Adrenal gland (tissue), 19 donors: ENCODE measurements at regions of chr18 and their contacts with region 1.

Region 1: DNA sequence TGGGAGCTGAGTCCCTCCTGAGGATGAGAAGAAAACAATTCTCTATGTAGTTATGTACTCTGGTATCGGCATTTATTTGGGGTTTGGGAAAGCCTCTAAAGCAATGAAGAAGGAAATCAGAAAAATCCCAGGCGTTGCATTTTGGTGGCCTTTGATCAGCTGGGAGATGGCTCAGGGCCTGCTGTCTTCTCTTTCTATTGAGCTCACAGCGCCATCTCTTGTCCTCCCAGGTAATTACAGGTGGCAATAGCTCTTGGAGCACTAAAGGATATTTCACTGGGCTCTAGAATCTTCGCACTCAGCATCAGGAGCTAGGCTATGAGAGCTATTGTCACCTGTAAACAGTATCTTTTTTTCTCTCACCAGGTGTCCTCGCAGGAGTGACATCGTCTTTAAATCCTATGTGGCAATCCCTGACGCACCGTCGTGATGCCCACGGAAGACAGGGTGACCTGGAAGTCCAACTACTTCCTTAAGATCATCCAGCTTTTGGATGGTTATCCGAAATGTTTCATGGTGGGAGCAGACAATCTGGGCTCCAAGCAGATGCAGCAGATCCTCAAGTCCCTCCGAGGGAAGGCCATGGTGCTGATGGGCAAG is 76.1 kb upstream of the PMAIP1 start:
- DNase-seq: peak; percentile 81 to 93 (median 84)
- H3K4me3 ChIP-seq: no peak overlapping the region
- H3K27ac ChIP-seq: no peak overlapping the region
- H3K4me1 ChIP-seq: peaks cover 0 to 6% of the 10 kb centered on the region in 2 donors
- H3K27me3 ChIP-seq: no peaks in the 10 kb centered on the region
- CTCF ChIP-seq: peak; percentile 81 to 93 (median 91)
- POLR2A ChIP-seq: no peak

Region 2: DNA sequence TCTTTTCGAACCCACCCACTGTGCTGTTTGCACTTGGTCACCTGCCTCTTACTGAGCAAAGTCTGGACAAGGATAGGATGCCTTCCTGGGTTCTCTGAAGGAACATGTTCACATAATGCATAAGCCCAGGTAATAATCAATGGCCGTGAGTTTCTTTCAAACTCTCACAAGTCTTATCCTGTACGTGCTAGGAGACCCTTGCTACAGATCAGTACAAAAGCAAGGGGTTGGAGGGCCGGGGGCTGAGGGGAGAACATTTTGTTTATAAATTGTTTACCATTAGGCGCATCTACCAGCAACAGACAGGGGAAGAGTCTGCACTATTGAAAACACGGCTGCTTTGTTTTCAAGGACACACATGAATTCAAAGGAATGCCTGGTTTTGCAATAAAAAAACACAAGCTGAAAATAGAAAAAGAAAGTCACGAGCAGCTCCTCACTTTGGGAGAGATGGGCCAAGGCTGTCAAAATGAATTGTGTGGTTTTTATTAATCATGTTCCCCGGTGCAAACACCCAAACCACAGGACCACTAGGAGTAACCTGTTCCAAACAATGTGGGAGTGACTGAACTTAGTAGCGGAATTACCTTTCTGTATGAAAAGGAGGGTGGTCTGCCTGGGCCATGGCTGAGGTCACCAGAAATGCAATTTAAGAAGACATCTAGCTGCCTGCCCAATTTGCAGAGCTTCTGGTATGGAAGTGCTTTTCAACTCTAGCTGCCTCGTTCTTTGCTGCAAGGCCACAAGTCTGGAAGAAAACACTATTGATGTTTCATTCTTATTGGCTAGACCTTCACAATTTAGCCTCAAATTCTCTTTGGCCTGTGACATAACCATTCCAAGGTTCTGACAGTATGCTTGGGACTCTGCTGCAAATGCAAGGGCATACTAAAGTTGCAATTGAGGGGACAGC is 200.0 kb before region 1 on chr18:
- intact Hi-C with region 1: loop called in 1 of 2 experiments (anchors 10 kb)
- DNase-seq: peak in 6 of 7 donors; percentile 47 to 67 (median 50)
- H3K4me3 ChIP-seq: peak overlapping the region in 1 of 4 donors; percentile 8
- H3K27ac ChIP-seq: peak overlapping the region; percentile 4 to 78 (median 63)
- H3K4me1 ChIP-seq: peaks cover 18 to 20% of the 10 kb centered on the region in 2 donors
- H3K27me3 ChIP-seq: no peaks in the 10 kb centered on the region
- CTCF ChIP-seq: peak in 1 of 6 experiments; percentile 24
- POLR2A ChIP-seq: peak in 1 of 2 donors; percentile 32

Region 3: DNA sequence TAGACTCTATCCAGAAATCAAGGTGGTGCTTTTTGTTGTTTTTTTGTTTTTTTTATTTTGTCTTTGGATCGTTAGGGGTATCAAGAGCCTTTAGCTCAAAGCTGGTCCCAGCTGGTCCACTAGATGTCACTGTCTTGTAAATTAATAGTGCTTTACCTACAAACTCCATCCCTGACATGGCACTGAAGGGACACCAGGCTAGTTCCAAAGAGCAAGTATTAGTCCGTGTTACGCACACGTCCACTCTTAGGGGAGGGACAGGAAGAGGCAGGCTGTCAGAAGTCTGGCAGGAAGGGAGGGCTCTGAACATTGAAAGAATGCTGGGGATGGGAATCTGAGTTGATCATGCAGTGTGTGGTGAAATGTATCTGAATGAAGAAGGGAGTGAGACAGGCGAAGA is 40.6 kb before region 1 on chr18:
- intact Hi-C with region 1: loop called in 1 of 2 experiments (anchors 2 kb)
- DNase-seq: peak; percentile 33 to 83 (median 62)
- H3K4me3 ChIP-seq: no peak overlapping the region
- H3K27ac ChIP-seq: no peak overlapping the region
- H3K4me1 ChIP-seq: peaks cover 14 to 30% of the 10 kb centered on the region in 2 donors
- H3K27me3 ChIP-seq: no peaks in the 10 kb centered on the region
- CTCF ChIP-seq: peak; percentile 35 to 71 (median 56)
- POLR2A ChIP-seq: no peak